ENCODE measurements at regions of chr19 and their contacts with region 1.

Region 1: DNA sequence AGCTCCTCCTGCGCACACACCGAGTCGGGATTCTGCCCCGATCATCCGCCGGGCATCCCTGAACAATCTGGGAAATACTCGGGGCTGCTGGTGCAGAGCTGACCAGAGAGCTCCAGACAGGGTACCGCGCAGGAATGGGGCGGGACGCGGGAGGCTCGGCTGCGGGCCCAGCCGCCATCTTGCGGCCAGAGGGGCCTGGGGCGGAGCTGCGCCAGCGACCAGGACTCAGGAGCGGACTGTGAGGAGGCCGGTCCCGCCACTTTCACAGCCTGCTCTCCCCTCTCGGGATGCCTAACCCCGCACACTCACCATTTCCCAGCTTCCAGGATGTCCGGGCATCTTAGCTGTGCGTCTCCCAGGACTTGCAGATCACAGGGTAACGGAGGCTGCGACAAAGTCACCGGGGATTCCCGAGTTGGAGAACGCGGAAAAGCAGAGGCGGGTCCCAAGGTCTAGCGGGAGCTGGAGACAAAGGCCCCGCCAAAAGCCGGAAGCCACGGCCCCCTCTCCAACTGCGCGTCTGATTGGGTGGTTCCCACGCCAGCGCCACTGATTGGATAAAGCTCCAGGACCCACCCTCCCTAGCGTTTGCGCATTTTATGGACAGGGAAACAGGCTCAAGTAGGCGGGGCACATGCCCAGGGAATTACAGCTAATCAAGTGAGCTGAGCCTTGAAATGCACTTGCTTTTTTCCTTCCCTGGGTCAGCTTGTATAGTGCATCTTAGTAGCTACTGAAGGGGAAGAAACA is 15.8 kb upstream of the ZNF43 start:
- H3K4me3 ChIP-seq: peak overlapping the region; percentile 65
- H3K27ac ChIP-seq: peak overlapping the region; percentile 51
- H3K4me1 ChIP-seq: no peaks in the 10 kb centered on the region
- CTCF ChIP-seq: no peak

Region 2: DNA sequence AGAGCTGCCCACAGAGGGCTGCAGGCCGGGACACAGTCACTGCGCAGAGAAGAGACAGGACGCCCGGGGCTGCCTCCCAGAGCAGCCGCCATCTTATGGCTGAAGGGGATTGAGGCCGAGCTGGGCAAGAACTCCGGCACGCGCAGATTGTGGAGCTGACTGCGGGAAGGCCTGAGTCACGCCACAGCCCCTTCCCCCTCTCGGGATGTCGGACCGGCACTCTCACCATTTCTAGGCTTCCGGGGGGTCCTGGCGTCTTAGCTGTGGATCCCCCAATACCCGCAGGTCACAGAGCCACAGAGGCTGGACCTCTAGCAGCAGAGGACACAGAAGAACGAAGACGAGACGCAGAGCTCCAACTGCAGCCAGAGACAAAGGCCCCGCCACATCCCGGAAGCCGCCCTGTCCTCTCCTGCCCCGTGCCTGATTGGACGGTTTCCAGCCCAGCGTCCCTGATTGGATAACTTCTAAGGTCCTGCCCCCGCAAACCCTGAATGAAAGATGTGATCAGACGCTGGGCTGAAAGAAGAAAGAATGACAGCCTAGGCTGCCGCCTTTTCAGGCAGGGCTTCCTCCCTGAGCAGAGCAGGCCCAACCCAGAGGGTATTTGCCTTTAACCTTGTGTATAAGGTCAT is 15.8 kb before region 1 on chr19 and contains the start of gene ZNF43:
- CTCF ChIA-PET with region 1: interaction called, 3 read pairs
- POLR2A ChIA-PET with region 1: interaction called, 23 read pairs
- H3K4me3 ChIP-seq: peak within 1 kb of the TSS; percentile 41
- H3K27ac ChIP-seq: no peak within 1 kb of the TSS
- H3K4me1 ChIP-seq: no peaks in the 10 kb centered on the region
- CTCF ChIP-seq: no peak

Measured in HEK293 (cell line).